ENCODE measurements at regions of chr12 and their contacts with region 1.

Region 1: DNA sequence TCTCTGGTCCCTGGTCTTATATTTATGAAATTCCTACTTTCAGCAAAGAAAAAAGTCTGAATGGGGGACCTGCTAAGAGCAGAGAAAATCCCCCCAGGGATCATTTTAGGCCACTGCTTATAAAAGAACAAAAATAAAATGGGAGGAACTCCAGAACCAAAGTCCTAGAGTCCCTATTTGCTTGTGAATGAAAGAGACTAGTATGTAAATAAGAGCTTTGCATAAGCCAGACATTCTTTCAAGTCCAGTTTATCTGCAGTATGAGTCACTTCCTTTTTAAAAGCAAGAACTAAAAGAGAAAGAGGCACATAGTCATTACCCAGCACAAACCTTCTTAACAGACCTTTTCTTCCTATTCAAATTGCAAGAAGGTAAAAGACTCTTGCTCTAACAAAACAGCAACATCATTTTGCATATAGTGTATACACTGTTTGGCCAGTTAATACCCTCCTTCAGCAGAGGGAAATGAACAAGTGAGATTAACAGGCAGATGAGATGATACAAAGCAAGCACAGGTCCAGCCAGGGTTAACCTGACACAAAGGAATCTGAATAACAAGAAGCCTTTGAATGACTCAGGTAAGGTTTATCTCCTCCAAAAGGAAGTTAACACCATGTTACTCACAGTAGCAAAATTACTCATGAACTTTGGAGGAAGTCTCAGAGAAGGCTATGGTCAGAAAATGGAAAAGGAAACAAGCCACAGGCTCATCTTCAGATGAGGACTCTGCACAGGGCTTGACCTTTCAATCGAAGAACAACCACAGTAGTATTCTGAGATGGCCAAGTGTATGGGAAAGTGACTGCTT is 87.3 kb downstream of the PHLDA1 start:
- DNase-seq: peak in 2 of 9 experiments; percentile 48 to 62
- ATAC-seq: peak; percentile 84
- H3K4me3 ChIP-seq: no peak overlapping the region
- H3K4me3 Mint-ChIP-seq: no peak overlapping the region
- H3K27ac ChIP-seq: peak overlapping the region; percentile 7 to 60
- H3K27ac Mint-ChIP-seq: peak overlapping the region; percentile 89
- H3K4me1 ChIP-seq: peaks cover 11% of the 10 kb centered on the region
- H3K4me1 Mint-ChIP-seq: peaks cover 18% of the 10 kb centered on the region
- H3K27me3 ChIP-seq: no peaks in the 10 kb centered on the region
- H3K27me3 Mint-ChIP-seq: no peaks in the 10 kb centered on the region
- CTCF ChIP-seq: no peak

Region 2: DNA sequence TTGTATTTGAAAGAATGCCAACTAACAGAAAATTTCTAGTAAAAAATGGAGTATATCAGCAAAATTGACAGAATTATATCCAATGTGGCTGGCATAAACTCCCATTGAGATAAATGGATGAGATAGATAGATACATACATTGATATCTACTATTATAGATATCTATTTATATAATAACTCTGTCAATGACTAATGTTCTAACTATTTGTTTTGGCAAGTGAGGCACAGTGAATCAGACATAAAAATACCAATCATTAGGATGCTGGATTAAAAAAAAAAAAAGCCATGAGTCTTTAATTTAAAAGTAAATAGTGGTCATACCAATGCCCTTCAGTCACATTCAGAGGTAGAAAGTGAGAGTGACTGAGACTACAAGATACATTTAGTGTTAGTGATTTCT is 497.4 kb before region 1 on chr12:
- CTCF ChIA-PET with region 1: no interaction called
- POLR2A ChIA-PET with region 1: no interaction called
- intact Hi-C with region 1: no loop called
- DNase-seq: no peak
- ATAC-seq: no peak
- H3K4me3 ChIP-seq: no peak overlapping the region
- H3K4me3 Mint-ChIP-seq: no peak overlapping the region
- H3K27ac ChIP-seq: no peak overlapping the region
- H3K27ac Mint-ChIP-seq: no peak overlapping the region
- H3K4me1 ChIP-seq: no peaks in the 10 kb centered on the region
- H3K4me1 Mint-ChIP-seq: no peaks in the 10 kb centered on the region
- H3K27me3 ChIP-seq: no peaks in the 10 kb centered on the region
- H3K27me3 Mint-ChIP-seq: peaks cover 2% of the 10 kb centered on the region
- CTCF ChIP-seq: no peak

Region 3: DNA sequence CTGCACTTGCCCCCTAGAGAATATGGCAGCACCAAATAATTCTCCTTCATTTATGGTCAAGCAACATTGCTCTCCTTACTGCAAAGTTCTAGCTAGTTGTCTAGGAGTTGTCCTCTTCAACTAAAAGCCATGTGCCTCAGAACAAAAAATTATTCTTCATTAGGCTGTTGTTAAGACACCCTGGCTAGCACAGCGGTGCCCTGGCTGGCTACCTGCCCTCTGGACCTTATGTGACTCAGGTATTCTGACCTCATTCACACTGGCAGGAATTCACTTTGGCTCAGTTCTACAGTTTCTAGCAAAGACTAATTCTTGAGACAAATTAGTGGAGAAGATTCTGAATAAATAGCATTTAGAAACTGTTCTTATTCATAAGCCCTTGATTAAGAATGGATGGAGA is 208.4 kb before region 1 on chr12:
- CTCF ChIA-PET with region 1: no interaction called
- POLR2A ChIA-PET with region 1: no interaction called
- intact Hi-C with region 1: no loop called
- DNase-seq: no peak
- ATAC-seq: no peak
- H3K4me3 ChIP-seq: no peak overlapping the region
- H3K4me3 Mint-ChIP-seq: no peak overlapping the region
- H3K27ac ChIP-seq: no peak overlapping the region
- H3K27ac Mint-ChIP-seq: no peak overlapping the region
- H3K4me1 ChIP-seq: no peaks in the 10 kb centered on the region
- H3K4me1 Mint-ChIP-seq: peaks cover 3% of the 10 kb centered on the region
- H3K27me3 ChIP-seq: no peaks in the 10 kb centered on the region
- H3K27me3 Mint-ChIP-seq: no peaks in the 10 kb centered on the region
- CTCF ChIP-seq: no peak

Region 4: DNA sequence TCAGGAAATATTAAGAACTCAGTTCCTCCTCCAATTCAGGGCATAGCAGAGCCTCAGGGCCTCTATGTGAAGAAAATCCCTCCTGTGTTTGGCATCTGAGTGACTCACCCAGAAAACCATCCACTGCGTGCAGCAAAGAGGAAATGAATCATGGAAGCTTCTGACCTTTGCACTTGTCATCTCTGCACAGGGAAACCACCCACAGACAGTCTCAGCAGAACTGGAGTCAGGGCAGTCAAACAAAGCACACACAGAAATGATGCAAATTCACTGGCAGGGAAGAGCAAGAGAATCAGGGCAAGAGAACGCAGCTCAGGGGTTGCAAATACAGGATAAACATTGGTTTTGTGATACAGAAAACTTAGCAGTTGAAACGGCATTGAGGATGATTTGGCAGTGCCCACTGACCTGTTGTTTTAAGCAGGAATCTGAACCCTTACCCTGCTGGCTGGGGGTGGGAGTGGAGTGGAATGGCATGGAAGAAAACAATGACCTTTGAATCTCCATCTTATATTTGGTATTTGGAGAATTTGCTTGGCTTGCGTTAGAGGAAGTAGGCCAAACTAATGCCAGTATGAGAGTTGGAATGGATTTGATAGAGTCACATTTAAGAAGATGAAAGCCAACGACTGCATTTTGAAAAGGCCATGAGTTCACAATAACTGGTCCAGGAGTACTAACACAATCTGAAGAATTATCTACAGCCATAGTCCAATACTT is 33.8 kb after region 1 on chr12:
- CTCF ChIA-PET with region 1: interaction called, 4 read pairs
- POLR2A ChIA-PET with region 1: no interaction called
- intact Hi-C with region 1: loop called in 1 of 2 experiments (anchors 5 kb)
- DNase-seq: peak; percentile 27 to 92 (median 75)
- ATAC-seq: peak; percentile 90
- H3K4me3 ChIP-seq: no peak overlapping the region
- H3K4me3 Mint-ChIP-seq: no peak overlapping the region
- H3K27ac ChIP-seq: peak overlapping the region in 1 of 2 experiments; percentile 63
- H3K27ac Mint-ChIP-seq: peak overlapping the region; percentile 71
- H3K4me1 ChIP-seq: peaks cover 23% of the 10 kb centered on the region
- H3K4me1 Mint-ChIP-seq: peaks cover 31% of the 10 kb centered on the region
- H3K27me3 ChIP-seq: no peaks in the 10 kb centered on the region
- H3K27me3 Mint-ChIP-seq: no peaks in the 10 kb centered on the region
- CTCF ChIP-seq: no peak